Caco-2 (cell line): ENCODE measurements at regions of chr2 and their contacts with region 1.

Region 1: DNA sequence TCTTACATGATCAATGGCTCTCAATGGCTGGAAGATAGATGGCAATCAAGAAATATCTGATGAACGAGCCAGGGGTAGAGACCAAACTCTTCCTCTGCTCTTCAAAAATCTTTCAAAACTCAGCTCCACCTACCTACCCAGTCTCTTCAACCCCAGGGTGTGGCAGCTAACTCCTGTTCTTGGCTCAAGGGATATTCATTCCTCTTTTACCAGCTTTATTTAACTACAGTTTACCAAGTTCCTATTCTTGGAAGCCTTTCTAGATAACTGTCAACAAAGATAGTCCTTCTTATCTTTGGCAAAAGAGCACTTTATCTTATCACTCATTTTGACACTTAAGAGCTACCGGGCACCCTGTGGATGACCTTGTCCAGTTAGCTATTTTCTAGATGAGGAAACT is 36.3 kb downstream of the EPHA4 start:
- DNase-seq: peak; percentile 83 to 84
- H3K4me3 ChIP-seq: no peak overlapping the region
- H3K4me3 Mint-ChIP-seq: peak overlapping the region; percentile 30
- H3K27ac Mint-ChIP-seq: peak overlapping the region; percentile 23
- H3K4me1 ChIP-seq: peaks cover 58% of the 10 kb centered on the region
- H3K4me1 Mint-ChIP-seq: peaks cover 60% of the 10 kb centered on the region
- H3K27me3 ChIP-seq: no peaks in the 10 kb centered on the region
- H3K27me3 Mint-ChIP-seq: no peaks in the 10 kb centered on the region
- CTCF ChIP-seq: no peak

Region 2: DNA sequence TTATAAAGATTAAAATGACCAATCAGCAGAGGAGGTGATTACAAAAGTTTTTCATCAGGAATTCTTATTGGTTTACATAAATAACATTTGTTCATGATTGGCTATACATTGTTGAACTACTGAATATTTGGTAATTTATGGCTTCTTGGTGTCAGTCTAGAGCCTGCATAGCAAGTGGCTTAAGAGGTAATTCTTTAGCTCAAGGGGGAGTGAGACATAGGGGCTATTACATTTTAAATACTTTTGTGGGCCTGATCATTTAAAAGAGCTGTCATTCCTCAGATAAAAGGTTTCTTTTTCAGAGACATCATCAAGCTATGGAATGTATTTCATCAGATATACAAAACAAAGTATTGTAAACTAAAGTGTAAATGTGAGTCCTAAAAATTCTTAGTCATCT is 337.5 kb before region 1 on chr2:
- CTCF ChIA-PET with region 1: no interaction called
- POLR2A ChIA-PET with region 1: no interaction called
- intact Hi-C with region 1: loop called (anchors 1 kb)
- DNase-seq: peak in 1 of 2 experiments; percentile 57
- H3K4me3 ChIP-seq: no peak overlapping the region
- H3K4me3 Mint-ChIP-seq: no peak overlapping the region
- H3K27ac Mint-ChIP-seq: peak overlapping the region; percentile 59
- H3K4me1 ChIP-seq: peaks cover 25% of the 10 kb centered on the region
- H3K4me1 Mint-ChIP-seq: peaks cover 22% of the 10 kb centered on the region
- H3K27me3 ChIP-seq: no peaks in the 10 kb centered on the region
- H3K27me3 Mint-ChIP-seq: no peaks in the 10 kb centered on the region
- CTCF ChIP-seq: no peak

Region 3: GRCh38 chr2:221318376-221319130 is 217.3 kb before region 1 on chr2:
- CTCF ChIA-PET with region 1: no interaction called
- POLR2A ChIA-PET with region 1: no interaction called
- intact Hi-C with region 1: no loop called
- DNase-seq: no peak
- H3K4me3 ChIP-seq: no peak overlapping the region
- H3K4me3 Mint-ChIP-seq: no peak overlapping the region
- H3K27ac Mint-ChIP-seq: no peak overlapping the region
- H3K4me1 ChIP-seq: no peaks in the 10 kb centered on the region
- H3K4me1 Mint-ChIP-seq: peaks cover 7% of the 10 kb centered on the region
- H3K27me3 ChIP-seq: no peaks in the 10 kb centered on the region
- H3K27me3 Mint-ChIP-seq: no peaks in the 10 kb centered on the region
- CTCF ChIP-seq: no peak

Region 4: DNA sequence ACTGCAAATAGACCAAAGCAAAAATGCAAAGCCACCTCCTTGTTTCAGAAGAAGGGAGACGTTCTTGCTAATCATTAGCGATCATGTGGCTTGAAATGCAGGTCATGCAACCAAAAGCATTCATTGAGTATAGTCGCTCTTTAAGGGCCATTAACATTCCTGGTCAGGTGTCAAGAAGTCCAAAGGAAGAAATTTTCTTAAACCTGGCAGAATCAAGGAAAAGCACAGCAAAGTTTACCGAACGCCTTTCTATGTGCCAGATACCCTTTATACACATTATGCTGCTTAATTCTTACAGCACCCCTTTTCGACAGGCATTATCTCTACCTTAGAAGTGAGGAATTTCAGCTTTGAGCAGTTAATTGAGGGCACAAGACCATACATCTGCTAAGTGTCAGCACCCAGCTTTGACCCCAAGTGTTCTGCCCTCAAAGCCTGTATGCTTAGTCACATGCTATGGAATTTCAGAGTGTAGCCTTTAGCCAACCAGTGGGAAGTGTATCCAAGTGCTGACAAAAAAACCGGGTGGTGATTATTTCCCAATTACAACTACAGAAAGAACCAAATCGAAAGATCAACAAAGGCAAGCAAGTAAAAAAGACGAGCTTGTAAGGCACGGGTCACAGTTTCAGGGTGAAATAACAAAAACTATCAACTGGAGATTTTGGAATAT is 34.5 kb before region 1 on chr2:
- CTCF ChIA-PET with region 1: no interaction called
- POLR2A ChIA-PET with region 1: no interaction called
- intact Hi-C with region 1: loop called (anchors 2 kb)
- DNase-seq: peak in 1 of 2 experiments; percentile 21
- H3K4me3 ChIP-seq: no peak overlapping the region
- H3K4me3 Mint-ChIP-seq: no peak overlapping the region
- H3K27ac Mint-ChIP-seq: peak overlapping the region; percentile 5
- H3K4me1 ChIP-seq: peaks cover 31% of the 10 kb centered on the region
- H3K4me1 Mint-ChIP-seq: peaks cover 28% of the 10 kb centered on the region
- H3K27me3 ChIP-seq: no peaks in the 10 kb centered on the region
- H3K27me3 Mint-ChIP-seq: no peaks in the 10 kb centered on the region
- CTCF ChIP-seq: no peak

Region 5: DNA sequence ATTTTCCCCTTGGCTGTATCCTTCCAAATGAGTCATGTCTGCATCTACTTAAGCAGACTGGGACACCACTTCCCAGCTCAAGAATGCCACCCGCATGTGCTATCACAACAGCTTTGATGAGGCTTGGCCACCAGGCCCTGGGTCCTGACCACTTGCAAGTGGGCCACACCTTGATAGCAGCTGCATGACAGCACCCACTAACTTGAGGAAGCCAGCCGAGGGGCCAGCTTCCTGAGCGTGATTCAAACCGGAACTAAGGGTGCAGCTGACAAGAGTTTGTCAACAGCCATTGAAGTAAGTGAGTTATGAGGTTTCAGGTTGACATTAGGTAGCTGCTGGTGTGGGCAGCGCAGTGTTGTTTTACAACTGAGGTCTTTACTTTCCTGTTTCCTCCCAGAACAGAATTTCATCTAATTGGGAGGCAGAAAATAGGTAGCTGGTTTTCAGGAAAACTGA is 18.1 kb before region 1 on chr2:
- CTCF ChIA-PET with region 1: interaction called, 6 read pairs
- POLR2A ChIA-PET with region 1: no interaction called
- intact Hi-C with region 1: loop called (anchors 1 kb)
- DNase-seq: no peak
- H3K4me3 ChIP-seq: no peak overlapping the region
- H3K4me3 Mint-ChIP-seq: no peak overlapping the region
- H3K27ac Mint-ChIP-seq: no peak overlapping the region
- H3K4me1 ChIP-seq: peaks cover 43% of the 10 kb centered on the region
- H3K4me1 Mint-ChIP-seq: peaks cover 8% of the 10 kb centered on the region
- H3K27me3 ChIP-seq: no peaks in the 10 kb centered on the region
- H3K27me3 Mint-ChIP-seq: no peaks in the 10 kb centered on the region
- CTCF ChIP-seq: no peak

Region 6: GRCh38 chr2:221554769-221555493 is 19.1 kb after region 1 on chr2:
- CTCF ChIA-PET with region 1: interaction called, 6 read pairs
- POLR2A ChIA-PET with region 1: no interaction called
- intact Hi-C with region 1: loop called (anchors 1 kb)
- DNase-seq: peak; percentile 60 to 70
- H3K4me3 ChIP-seq: no peak overlapping the region
- H3K4me3 Mint-ChIP-seq: peak overlapping the region; percentile 65
- H3K27ac Mint-ChIP-seq: peak overlapping the region; percentile 84
- H3K4me1 ChIP-seq: peaks cover 60% of the 10 kb centered on the region
- H3K4me1 Mint-ChIP-seq: peaks cover 61% of the 10 kb centered on the region
- H3K27me3 ChIP-seq: no peaks in the 10 kb centered on the region
- H3K27me3 Mint-ChIP-seq: no peaks in the 10 kb centered on the region
- CTCF ChIP-seq: no peak

Region 7: GRCh38 chr2:221588306-221588985 is 52.6 kb after region 1 on chr2:
- CTCF ChIA-PET with region 1: interaction called, 7 read pairs
- POLR2A ChIA-PET with region 1: no interaction called
- intact Hi-C with region 1: loop called (anchors 1 kb)
- DNase-seq: no peak
- H3K4me3 ChIP-seq: no peak overlapping the region
- H3K4me3 Mint-ChIP-seq: peak overlapping the region; percentile 13
- H3K27ac Mint-ChIP-seq: peak overlapping the region; percentile 80
- H3K4me1 ChIP-seq: peaks cover 50% of the 10 kb centered on the region
- H3K4me1 Mint-ChIP-seq: peaks cover 38% of the 10 kb centered on the region
- H3K27me3 ChIP-seq: no peaks in the 10 kb centered on the region
- H3K27me3 Mint-ChIP-seq: no peaks in the 10 kb centered on the region
- CTCF ChIP-seq: no peak

Region 8: DNA sequence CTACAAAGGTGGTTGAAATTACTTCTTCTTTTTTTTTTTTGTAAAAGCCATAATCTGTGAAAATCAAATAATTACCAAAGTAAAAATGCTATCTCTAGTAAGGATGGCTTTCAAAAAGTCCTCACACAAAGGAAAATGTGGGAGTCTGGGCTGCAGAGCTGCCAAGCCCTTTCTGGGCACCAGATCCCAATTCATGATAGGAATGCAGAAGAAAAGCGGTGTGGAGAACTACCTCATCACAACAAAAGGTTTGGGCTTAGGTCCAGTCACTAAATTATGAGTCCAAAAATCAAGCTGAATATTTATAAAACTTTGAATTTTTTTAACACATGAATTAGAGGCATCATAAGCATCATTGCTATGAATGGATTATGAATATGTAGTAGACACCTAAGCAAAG is 67.1 kb after region 1 on chr2:
- CTCF ChIA-PET with region 1: no interaction called
- POLR2A ChIA-PET with region 1: no interaction called
- intact Hi-C with region 1: loop called (anchors 1 kb)
- DNase-seq: no peak
- H3K4me3 ChIP-seq: no peak overlapping the region
- H3K4me3 Mint-ChIP-seq: no peak overlapping the region
- H3K27ac Mint-ChIP-seq: no peak overlapping the region
- H3K4me1 ChIP-seq: peaks cover 59% of the 10 kb centered on the region
- H3K4me1 Mint-ChIP-seq: peaks cover 21% of the 10 kb centered on the region
- H3K27me3 ChIP-seq: no peaks in the 10 kb centered on the region
- H3K27me3 Mint-ChIP-seq: no peaks in the 10 kb centered on the region
- CTCF ChIP-seq: no peak

Region 9: GRCh38 chr2:221635949-221636348 is 100.1 kb after region 1 on chr2:
- CTCF ChIA-PET with region 1: no interaction called
- POLR2A ChIA-PET with region 1: no interaction called
- intact Hi-C with region 1: no loop called
- DNase-seq: peak in 1 of 2 experiments; percentile 31
- H3K4me3 ChIP-seq: no peak overlapping the region
- H3K4me3 Mint-ChIP-seq: no peak overlapping the region
- H3K27ac Mint-ChIP-seq: no peak overlapping the region
- H3K4me1 ChIP-seq: no peaks in the 10 kb centered on the region
- H3K4me1 Mint-ChIP-seq: no peaks in the 10 kb centered on the region
- H3K27me3 ChIP-seq: no peaks in the 10 kb centered on the region
- H3K27me3 Mint-ChIP-seq: no peaks in the 10 kb centered on the region
- CTCF ChIP-seq: peak; percentile 28 to 38

Region 10: DNA sequence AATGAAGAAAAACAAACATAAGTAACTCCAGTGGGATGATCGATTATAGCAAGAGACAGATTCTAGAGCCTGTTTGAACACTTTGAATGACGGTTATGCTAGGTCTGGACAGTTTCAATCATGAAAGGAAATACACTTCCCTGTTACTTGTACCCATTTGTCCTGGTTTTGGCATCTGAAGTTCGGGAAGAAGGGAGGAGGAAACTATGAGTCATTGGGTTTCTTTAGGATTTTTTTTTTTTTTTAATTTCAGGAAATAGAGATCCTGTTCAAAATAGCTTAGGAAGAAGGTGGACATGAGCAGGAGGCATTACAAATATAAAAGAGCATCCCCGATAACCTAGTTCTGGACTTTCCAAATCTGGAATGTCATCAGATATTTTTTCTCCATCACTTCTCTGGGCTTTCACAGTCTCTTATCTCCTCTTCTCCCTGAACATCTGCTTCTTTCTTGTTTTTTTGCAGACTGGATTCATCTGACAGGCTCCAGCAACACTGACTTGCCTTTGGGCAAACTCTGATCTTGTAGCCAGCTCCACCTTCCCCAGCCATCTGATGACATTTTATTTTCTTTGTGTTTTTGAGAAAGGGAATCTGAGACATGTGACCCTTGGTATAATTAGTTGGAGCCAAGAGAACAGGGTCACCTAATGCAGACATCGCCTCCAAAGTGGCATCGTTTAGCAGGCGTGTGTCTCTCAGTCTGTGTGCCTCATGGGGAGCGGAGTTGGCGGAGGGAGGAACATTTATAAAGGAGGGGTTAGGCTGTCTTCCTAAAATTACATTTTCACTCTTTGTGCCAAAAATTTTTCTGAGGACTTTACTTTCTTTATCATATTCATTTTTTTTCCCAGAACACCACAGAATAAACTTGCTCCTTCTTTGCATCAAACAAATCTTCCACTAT is 231.5 kb after region 1 on chr2:
- CTCF ChIA-PET with region 1: no interaction called
- POLR2A ChIA-PET with region 1: no interaction called
- intact Hi-C with region 1: no loop called
- DNase-seq: no peak
- H3K4me3 ChIP-seq: no peak overlapping the region
- H3K4me3 Mint-ChIP-seq: no peak overlapping the region
- H3K27ac Mint-ChIP-seq: no peak overlapping the region
- H3K4me1 ChIP-seq: peaks cover 10% of the 10 kb centered on the region
- H3K4me1 Mint-ChIP-seq: peaks cover 12% of the 10 kb centered on the region
- H3K27me3 ChIP-seq: no peaks in the 10 kb centered on the region
- H3K27me3 Mint-ChIP-seq: no peaks in the 10 kb centered on the region
- CTCF ChIP-seq: no peak